Left cardiac atrium (tissue), 4 donors: ENCODE measurements at regions of chr5 and their contacts with region 1.

Region 1: GRCh38 chr5:147188200-147189108 is 46.4 kb upstream of the STK32A start:
- DNase-seq: peak; percentile 36
- ATAC-seq: peak; percentile 74 to 79

Region 2: DNA sequence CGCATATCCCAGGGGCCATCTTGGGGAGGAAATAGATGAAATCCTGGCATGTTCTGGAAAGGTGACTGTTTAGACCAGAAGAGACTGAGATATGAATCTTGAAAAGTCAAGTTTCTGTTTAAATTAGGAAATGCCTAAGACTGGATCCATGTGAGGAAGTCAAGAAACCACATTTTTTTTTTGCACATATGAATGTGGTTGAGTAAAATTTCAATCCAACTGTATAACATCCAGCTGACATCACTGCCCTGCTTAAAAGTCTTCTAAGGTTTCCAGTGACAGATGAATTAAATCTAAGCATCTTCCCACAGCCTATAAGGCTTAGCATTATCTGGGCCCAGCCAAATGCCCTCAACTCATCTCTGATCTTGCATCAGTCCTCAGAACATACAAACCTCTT is 789.0 kb before region 1 on chr5:
- intact Hi-C with region 1: no loop called
- DNase-seq: no peak
- ATAC-seq: no peak

Region 3: GRCh38 chr5:146533260-146533857 is 655.1 kb before region 1 on chr5:
- intact Hi-C with region 1: loop called in 1 of 2 experiments (anchors 2 kb)
- DNase-seq: peak; percentile 57
- ATAC-seq: peak; percentile 50 to 77

Region 4: GRCh38 chr5:146541958-146542849 is 646.2 kb before region 1 on chr5:
- intact Hi-C with region 1: loop called in 1 of 2 experiments (anchors 10 kb)
- DNase-seq: peak; percentile 65
- ATAC-seq: peak; percentile 81 to 85

Region 5: DNA sequence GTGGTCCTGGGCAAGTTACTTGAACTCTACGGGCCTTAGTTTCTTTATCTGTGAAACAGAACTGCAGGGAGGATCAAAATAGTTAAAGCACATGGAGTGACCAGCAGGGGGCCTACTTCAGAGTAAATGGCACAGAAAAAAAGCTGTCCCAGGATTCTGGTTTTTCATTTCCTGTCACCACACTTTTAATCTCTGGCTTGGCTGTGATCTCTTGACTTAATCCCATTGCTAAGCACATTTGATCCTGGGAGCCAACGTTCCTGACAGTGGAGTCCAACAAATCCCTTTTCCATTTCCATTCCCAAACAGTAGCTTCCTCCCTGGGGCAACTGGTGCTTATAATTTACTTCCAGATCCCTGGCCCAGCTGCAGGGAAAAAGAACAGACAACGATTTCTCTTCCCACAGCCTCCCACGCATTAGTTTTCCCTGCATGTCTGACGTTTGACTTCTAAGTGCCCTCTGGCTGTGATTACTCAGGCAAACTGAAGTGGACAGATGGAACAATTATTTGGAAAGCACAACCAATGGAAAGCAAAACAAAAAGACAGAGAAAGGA is 90.1 kb before region 1 on chr5:
- intact Hi-C with region 1: loop called in 1 of 2 experiments (anchors 2 kb)
- DNase-seq: peak; percentile 34
- ATAC-seq: peak; percentile 65 to 72

Region 6: DNA sequence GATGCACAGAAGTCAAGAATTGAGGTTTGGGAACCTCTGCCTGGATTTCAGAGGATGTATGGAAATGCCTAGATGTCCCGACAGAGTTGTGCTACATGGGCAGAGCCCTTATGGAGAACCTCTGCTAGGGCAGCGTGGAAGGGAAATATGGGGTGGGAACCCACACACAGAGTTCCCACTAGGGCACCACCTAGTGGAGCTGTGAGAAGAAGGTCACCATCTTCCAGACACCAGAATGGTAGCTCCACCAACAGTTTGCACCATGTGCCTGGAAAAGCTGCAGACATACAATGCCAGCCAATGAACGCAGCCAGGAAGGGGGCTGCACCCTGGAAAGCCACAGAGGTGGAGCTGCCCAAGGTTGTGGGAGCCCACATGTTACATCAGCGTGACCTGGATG is 150.9 kb after region 1 on chr5:
- intact Hi-C with region 1: no loop called
- DNase-seq: no peak
- ATAC-seq: no peak